ENCODE measurements at regions of chr2 and their contacts with region 1.

Region 1: DNA sequence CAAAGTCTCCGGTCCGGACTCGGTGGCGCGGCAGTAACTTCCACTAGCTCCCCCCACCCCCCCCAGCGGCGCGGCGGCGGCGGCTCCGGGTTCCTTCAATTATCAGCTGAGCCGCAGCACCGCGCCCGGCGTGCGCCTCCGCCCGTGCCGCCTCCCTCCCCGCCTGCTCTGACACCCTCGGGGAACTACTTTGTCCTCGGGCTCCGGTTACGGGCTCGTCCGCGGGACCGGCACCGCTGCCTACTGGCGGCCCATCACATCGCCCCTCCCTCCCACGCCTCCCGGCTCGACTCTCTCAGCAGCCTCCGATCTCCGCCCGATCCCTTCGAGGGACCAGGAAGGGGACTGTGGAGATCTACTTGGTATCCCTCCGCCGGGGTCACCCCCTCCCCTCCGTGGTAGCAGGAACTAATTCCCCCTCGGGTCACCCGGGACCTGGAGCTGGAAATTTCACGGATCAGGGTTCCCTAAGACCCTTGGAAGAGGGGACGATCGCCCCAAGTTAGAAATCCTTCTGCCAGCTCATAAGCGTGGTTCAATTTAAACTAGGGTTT is at the start of gene TRIP12:
- DNase-seq: peak; percentile 93 to 98 (median 95)
- H3K4me3 ChIP-seq: peak within 1 kb of the TSS; percentile 98 to 99
- H3K4me3 Mint-ChIP-seq: peak within 1 kb of the TSS; percentile 93 to 100 (median 98)
- H3K27ac ChIP-seq: peak within 1 kb of the TSS; percentile 97
- H3K27ac Mint-ChIP-seq: peak within 1 kb of the TSS; percentile 97 to 100 (median 98)
- H3K4me1 ChIP-seq: peaks cover 43% of the 10 kb centered on the region
- H3K4me1 Mint-ChIP-seq: peaks cover 28 to 55% (median 34%) of the 10 kb centered on the region in 4 donors
- H3K27me3 ChIP-seq: no peaks in the 10 kb centered on the region
- H3K27me3 Mint-ChIP-seq: peaks cover 0 to 4% of the 10 kb centered on the region in 2 donors
- total RNA-seq, gene TRIP12: 218 to 224 TPM

Region 2: DNA sequence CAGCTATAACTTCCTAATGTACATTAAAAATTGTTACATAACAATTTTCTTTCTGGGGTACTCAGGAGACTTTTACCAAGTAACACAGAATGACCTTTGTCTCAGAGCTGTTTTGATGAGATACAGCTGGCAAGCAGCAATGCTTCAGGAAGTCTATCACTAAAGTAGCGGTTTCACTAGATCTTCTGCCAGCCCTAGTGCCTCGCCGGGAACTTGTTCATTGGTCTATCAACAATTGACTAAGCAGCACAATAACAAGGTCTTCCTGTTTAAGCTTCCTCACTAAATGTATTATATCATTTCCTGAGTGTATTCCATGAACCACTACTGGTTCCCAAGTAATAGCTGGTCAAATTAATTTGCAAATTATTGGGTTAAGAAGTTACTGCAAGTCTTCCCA is 69.4 kb before region 1 on chr2:
- CTCF ChIA-PET with region 1: interaction called, 4 read pairs
- POLR2A ChIA-PET with region 1: interaction called, 5 read pairs
- intact Hi-C with region 1: loop called (anchors 5 kb)
- DNase-seq: peak; percentile 45 to 57 (median 47)
- H3K4me3 ChIP-seq: no peak overlapping the region
- H3K4me3 Mint-ChIP-seq: peak overlapping the region in 6 of 8 donors; percentile 9 to 62 (median 42)
- H3K27ac ChIP-seq: peak overlapping the region; percentile 23
- H3K27ac Mint-ChIP-seq: peak overlapping the region; percentile 57 to 88 (median 78)
- H3K4me1 ChIP-seq: peaks cover 62% of the 10 kb centered on the region
- H3K4me1 Mint-ChIP-seq: peaks cover 47 to 77% (median 61%) of the 10 kb centered on the region in 4 donors
- H3K27me3 ChIP-seq: no peaks in the 10 kb centered on the region
- H3K27me3 Mint-ChIP-seq: no peaks in the 10 kb centered on the region

Region 3: GRCh38 chr2:229910832-229911412 is 11.0 kb before region 1 on chr2:
- CTCF ChIA-PET with region 1: interaction called, 26 read pairs
- POLR2A ChIA-PET with region 1: interaction called, 27 read pairs
- intact Hi-C with region 1: loop called (anchors 1 kb)
- DNase-seq: peak in 4 of 5 donors; percentile 22 to 35 (median 30)
- H3K4me3 ChIP-seq: no peak overlapping the region
- H3K4me3 Mint-ChIP-seq: peak overlapping the region in 4 of 8 donors; percentile 17 to 43 (median 30)
- H3K27ac ChIP-seq: peak overlapping the region; percentile 2
- H3K27ac Mint-ChIP-seq: peak overlapping the region in 6 of 7 donors; percentile 28 to 78 (median 48)
- H3K4me1 ChIP-seq: peaks cover 65% of the 10 kb centered on the region
- H3K4me1 Mint-ChIP-seq: peaks cover 32 to 60% (median 43%) of the 10 kb centered on the region in 4 donors
- H3K27me3 ChIP-seq: no peaks in the 10 kb centered on the region
- H3K27me3 Mint-ChIP-seq: no peaks in the 10 kb centered on the region

Region 4: DNA sequence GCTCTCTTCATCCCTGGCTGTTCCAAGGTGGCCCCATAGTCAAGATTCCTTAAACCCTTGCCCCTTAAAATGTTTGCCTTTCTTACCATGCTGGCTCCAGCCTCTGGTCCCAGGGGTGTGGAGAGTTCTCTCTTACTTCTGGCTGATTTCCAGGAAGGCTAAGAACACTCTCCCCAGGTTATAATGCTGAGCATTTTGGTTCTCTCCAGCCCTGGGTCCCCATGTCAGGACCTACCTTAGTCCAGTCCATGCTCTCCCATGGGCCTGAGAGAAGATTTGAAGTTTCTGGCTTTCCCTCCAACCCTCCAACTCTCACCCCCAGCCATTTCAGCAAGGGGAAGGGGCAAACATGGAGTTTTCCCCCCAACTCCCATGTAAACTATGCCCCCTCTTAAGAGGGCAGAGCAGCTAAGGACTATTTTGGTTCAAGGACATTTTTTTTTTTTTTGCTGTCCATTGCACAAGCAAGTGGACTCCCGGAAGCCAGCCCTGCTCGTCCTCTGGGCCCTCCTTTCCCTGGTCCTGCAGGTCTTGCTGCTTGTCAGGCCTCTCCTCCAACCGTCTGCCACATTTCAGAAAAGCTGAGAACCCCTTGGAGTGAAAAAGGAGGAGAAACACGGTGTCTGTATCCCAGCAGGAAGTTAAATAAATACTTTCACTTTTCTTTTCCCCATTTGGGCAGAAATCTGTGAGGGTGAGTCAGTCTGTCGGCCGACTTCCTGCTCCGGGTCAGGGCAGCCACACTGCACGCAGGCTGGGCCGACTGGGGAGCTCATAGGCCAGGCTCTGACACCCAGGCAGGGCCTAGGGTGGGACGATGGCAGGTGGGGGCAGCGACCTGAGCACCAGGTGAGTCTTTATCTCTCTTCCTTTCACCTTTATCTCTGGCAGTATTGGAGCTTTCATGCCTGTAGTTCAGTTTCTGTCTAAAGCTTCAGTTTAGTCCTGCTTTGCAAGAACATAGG is 404.8 kb after region 1 on chr2 and contains the start of gene SP140L:
- CTCF ChIA-PET with region 1: no interaction called
- POLR2A ChIA-PET with region 1: no interaction called
- intact Hi-C with region 1: loop called (anchors 10 kb)
- DNase-seq: peak; percentile 73 to 89 (median 79)
- H3K4me3 ChIP-seq: peak within 1 kb of the TSS; percentile 51 to 82
- H3K4me3 Mint-ChIP-seq: peak within 1 kb of the TSS; percentile 90 to 98 (median 94)
- H3K27ac ChIP-seq: peak within 1 kb of the TSS; percentile 84
- H3K27ac Mint-ChIP-seq: peak within 1 kb of the TSS; percentile 94 to 99 (median 97)
- H3K4me1 ChIP-seq: peaks cover 78% of the 10 kb centered on the region
- H3K4me1 Mint-ChIP-seq: peaks cover 48 to 90% (median 75%) of the 10 kb centered on the region in 4 donors
- H3K27me3 ChIP-seq: no peaks in the 10 kb centered on the region
- H3K27me3 Mint-ChIP-seq: no peaks in the 10 kb centered on the region
- total RNA-seq, gene SP140L: 98.6 to 102 TPM